ENCODE measurements at regions of chr18 and their contacts with region 1.

Region 1: DNA sequence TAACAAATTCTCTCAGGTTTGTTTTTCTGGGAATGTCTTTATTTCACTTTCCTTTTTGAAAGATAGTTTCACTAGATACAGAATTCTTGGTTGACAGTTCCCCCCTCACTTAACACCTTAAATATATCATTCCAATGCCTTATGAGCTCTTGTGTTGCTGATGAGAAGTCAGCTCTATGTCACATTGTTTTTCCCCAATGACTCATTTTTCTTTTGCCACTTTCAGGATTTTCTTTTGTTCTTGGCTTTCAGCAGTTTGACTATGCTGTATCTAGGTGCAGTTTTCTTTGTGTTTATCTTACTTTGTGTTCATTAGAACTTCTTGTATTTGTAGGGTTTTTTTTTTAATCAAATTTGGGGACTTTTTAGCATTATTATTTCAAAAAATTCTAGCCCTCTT is 5.6 kb upstream of the RALBP1 start:
- DNase-seq: no peak
- H3K4me3 ChIP-seq: no peak overlapping the region
- H3K27ac ChIP-seq: no peak overlapping the region
- H3K4me1 ChIP-seq: peaks cover 8% of the 10 kb centered on the region
- H3K27me3 ChIP-seq: no peaks in the 10 kb centered on the region
- CTCF ChIP-seq: no peak
- POLR2A ChIP-seq: no peak

Region 2: GRCh38 chr18:9494766-9495331 is 25.2 kb after region 1 on chr18:
- intact Hi-C with region 1: loop called (anchors 2 kb)
- DNase-seq: no peak
- H3K4me3 ChIP-seq: no peak overlapping the region
- H3K27ac ChIP-seq: no peak overlapping the region
- H3K4me1 ChIP-seq: peaks cover 19% of the 10 kb centered on the region
- H3K27me3 ChIP-seq: no peaks in the 10 kb centered on the region
- CTCF ChIP-seq: no peak
- POLR2A ChIP-seq: no peak